ENCODE measurements at regions of chr12 and their contacts with region 1.

Region 1: GRCh38 chr12:56468216-56469006 is at the start of gene SPRYD4:
- DNase-seq: peak; percentile 96
- H3K4me3 Mint-ChIP-seq: peak within 1 kb of the TSS; percentile 94
- H3K27ac Mint-ChIP-seq: peak within 1 kb of the TSS; percentile 94
- H3K4me1 Mint-ChIP-seq: peaks cover 29% of the 10 kb centered on the region
- H3K27me3 Mint-ChIP-seq: no peaks in the 10 kb centered on the region
- total RNA-seq, gene SPRYD4: 2.9 to 3.1 TPM

Region 2: GRCh38 chr12:56266693-56267442 is 201.5 kb before region 1 on chr12 and contains the start of gene COQ10A:
- CTCF ChIA-PET with region 1: interaction called, 18 read pairs
- POLR2A ChIA-PET with region 1: interaction called, 4 read pairs
- DNase-seq: peak; percentile 90
- H3K4me3 Mint-ChIP-seq: peak within 1 kb of the TSS; percentile 87
- H3K27ac Mint-ChIP-seq: peak within 1 kb of the TSS; percentile 80
- H3K4me1 Mint-ChIP-seq: peaks cover 21% of the 10 kb centered on the region
- H3K27me3 Mint-ChIP-seq: no peaks in the 10 kb centered on the region
- total RNA-seq, gene COQ10A: 12.8 to 16.7 TPM

Region 3: GRCh38 chr12:56315622-56316473 is 152.6 kb before region 1 on chr12 and contains the start of gene CNPY2:
- CTCF ChIA-PET with region 1: interaction called, 24 read pairs
- POLR2A ChIA-PET with region 1: interaction called, 7 read pairs
- DNase-seq: peak; percentile 94
- H3K4me3 Mint-ChIP-seq: peak within 1 kb of the TSS; percentile 96
- H3K27ac Mint-ChIP-seq: peak within 1 kb of the TSS; percentile 94
- H3K4me1 Mint-ChIP-seq: peaks cover 21% of the 10 kb centered on the region
- H3K27me3 Mint-ChIP-seq: no peaks in the 10 kb centered on the region
- total RNA-seq, gene CNPY2: 95.0 to 99.3 TPM

Region 4: DNA sequence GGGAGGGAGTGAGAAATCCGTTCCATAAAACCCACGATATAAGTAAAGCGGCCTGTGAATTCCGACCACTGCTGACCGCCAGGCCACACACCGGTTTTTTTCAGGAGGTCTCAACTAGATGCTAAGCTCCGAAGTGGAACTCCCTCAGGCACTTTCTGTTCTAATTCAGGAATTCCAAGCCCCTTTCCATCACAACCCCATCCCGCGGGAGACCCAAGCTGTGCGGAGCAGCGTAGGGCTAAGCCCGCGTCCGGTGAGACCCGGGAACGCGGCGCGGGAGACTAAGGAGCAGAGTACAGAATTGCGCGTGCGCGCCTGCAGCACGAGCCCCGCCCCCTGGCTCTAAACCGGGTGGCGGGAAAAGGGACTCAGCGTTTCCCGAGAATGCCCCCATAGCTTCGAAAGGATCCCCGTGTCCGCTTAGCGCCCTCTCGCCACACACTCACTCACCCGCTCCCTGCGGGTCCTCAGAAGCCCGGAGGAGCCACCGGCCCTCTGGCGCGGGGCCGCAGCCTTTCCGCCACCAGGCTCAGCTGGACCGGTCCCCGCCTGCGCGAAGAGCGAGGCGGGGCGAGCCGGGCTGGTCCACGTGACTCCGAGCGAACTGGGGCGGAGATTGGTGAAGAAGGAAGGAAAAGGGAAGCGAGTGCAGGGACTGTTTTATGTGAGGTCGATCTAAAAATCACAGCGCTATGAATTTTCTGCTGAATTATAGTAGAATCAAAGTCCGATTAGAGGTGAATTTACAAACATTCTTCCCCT is 19.4 kb before region 1 on chr12 and contains the start of gene TIMELESS:
- CTCF ChIA-PET with region 1: interaction called, 50 read pairs
- POLR2A ChIA-PET with region 1: interaction called, 66 read pairs
- DNase-seq: peak; percentile 87
- H3K4me3 Mint-ChIP-seq: peak within 1 kb of the TSS; percentile 89
- H3K27ac Mint-ChIP-seq: peak within 1 kb of the TSS; percentile 81
- H3K4me1 Mint-ChIP-seq: peaks cover 36% of the 10 kb centered on the region
- H3K27me3 Mint-ChIP-seq: peaks cover 4% of the 10 kb centered on the region
- total RNA-seq, gene TIMELESS: 44.1 to 45.6 TPM

Region 5: DNA sequence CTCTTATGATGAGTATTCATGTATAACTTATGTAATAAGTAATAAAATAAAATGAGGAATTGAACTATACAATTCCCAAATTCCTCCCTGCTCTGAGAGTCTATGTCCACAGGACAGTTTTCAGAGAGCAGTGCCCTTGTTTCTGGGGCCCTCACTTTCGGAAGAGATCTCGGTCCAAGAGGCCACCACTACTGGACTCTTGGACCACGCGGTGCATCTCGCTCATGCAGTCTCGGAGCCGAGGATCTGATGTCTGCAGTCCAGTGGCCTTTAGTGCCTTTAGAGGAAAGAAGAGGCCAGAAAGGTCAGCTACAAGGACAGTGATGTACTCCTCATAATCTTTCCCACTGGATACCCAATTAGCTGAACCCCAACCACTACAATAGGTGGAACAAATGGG is 11.2 kb after region 1 on chr12:
- CTCF ChIA-PET with region 1: interaction called, 5 read pairs
- POLR2A ChIA-PET with region 1: interaction called, 13 read pairs
- DNase-seq: no peak
- H3K4me3 Mint-ChIP-seq: no peak overlapping the region
- H3K27ac Mint-ChIP-seq: no peak overlapping the region
- H3K4me1 Mint-ChIP-seq: peaks cover 7% of the 10 kb centered on the region
- H3K27me3 Mint-ChIP-seq: no peaks in the 10 kb centered on the region

Measured in activated CD4-positive, alpha-beta memory T cell treated with anti-CD3 and anti-CD28 coated beads, Interleukin-2, amount 10 ng/mL, durations not matched to agents 7 days and 5 days (primary cell).